ENCODE measurements at regions of chr2 and their contacts with region 1.

Region 1: DNA sequence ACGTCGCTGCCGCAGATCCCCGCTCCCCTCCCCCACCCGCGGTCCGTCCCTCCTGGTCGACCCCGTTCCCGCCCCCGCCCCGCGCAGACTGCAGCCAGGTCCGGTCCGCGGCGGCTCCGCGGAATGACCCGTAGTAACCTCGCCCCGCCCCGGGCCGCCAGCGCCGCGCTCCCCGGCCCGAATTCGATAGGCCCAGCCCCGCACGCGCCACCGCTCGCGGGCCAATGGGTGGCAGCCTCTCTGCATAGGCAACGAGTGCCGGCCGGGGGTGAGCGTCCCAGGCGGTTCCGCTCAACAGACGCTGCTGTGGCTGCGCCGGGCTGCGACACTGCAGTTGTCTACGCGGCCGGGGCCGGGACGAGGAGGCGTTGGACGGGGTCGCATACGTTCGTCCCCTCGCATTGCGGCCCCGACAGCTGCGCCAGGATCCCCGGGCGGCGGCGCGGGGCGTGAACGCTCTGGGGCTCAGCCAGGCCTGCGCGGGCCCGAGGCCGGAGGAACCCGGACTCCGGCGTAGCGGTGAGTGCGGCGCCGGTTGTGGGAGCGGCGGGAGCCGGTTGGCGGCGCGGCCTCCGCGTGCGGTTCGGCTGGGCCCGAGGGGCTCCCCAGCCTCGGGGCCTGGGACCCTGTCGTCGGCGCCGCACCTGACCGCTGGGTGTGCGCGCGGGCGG is at the start of gene ACSL3:
- DNase-seq: peak; percentile 85 to 96 (median 91)
- ATAC-seq: peak; percentile 99
- H3K4me3 ChIP-seq: peak within 1 kb of the TSS; percentile 82
- H3K4me3 Mint-ChIP-seq: peak within 1 kb of the TSS in 9 of 10 donors; percentile 62 to 88 (median 79)
- H3K27ac ChIP-seq: peak within 1 kb of the TSS; percentile 90
- H3K27ac Mint-ChIP-seq: peak within 1 kb of the TSS in 8 of 9 donors; percentile 87 to 96 (median 92)
- H3K4me1 ChIP-seq: peaks cover 13 to 20% of the 10 kb centered on the region in 2 donors
- H3K4me1 Mint-ChIP-seq: peaks cover 0 to 15% (median 9%) of the 10 kb centered on the region in 7 donors
- H3K27me3 ChIP-seq: no peaks in the 10 kb centered on the region
- H3K27me3 Mint-ChIP-seq: peaks cover 0 to 15% (median 0%) of the 10 kb centered on the region in 5 donors
- total RNA-seq, gene ACSL3: 30.3 to 69.6 (median 40.5) TPM

Region 2: GRCh38 chr2:222655787-222656525 is 204.9 kb before region 1 on chr2 and contains the start of gene FARSB:
- CTCF ChIA-PET with region 1: no interaction called
- POLR2A ChIA-PET with region 1: no interaction called
- intact Hi-C with region 1: loop called (anchors 1 kb)
- DNase-seq: peak; percentile 86 to 98 (median 94)
- ATAC-seq: peak; percentile 96
- H3K4me3 ChIP-seq: peak within 1 kb of the TSS; percentile 82
- H3K4me3 Mint-ChIP-seq: peak within 1 kb of the TSS; percentile 95 to 100 (median 99)
- H3K27ac ChIP-seq: peak within 1 kb of the TSS; percentile 94
- H3K27ac Mint-ChIP-seq: peak within 1 kb of the TSS; percentile 98 to 100 (median 99)
- H3K4me1 ChIP-seq: peaks cover 18 to 20% of the 10 kb centered on the region in 2 donors
- H3K4me1 Mint-ChIP-seq: peaks cover 30 to 59% (median 45%) of the 10 kb centered on the region in 7 donors
- H3K27me3 ChIP-seq: no peaks in the 10 kb centered on the region
- H3K27me3 Mint-ChIP-seq: no peaks in the 10 kb centered on the region
- total RNA-seq, gene FARSB: 10.5 to 23.3 (median 13.8) TPM

Region 3: GRCh38 chr2:222792001-222792611 is 68.8 kb before region 1 on chr2:
- CTCF ChIA-PET with region 1: no interaction called
- POLR2A ChIA-PET with region 1: no interaction called
- intact Hi-C with region 1: loop called (anchors 1 to 2 kb)
- DNase-seq: no peak
- ATAC-seq: peak; percentile 68
- H3K4me3 ChIP-seq: no peak overlapping the region
- H3K4me3 Mint-ChIP-seq: no peak overlapping the region
- H3K27ac ChIP-seq: no peak overlapping the region
- H3K27ac Mint-ChIP-seq: no peak overlapping the region
- H3K4me1 ChIP-seq: peaks cover 0 to 10% of the 10 kb centered on the region in 2 donors
- H3K4me1 Mint-ChIP-seq: peaks cover 11 to 17% (median 12%) of the 10 kb centered on the region in 7 donors
- H3K27me3 ChIP-seq: no peaks in the 10 kb centered on the region
- H3K27me3 Mint-ChIP-seq: no peaks in the 10 kb centered on the region

Region 4: GRCh38 chr2:222895144-222895543 is 34.3 kb after region 1 on chr2:
- CTCF ChIA-PET with region 1: no interaction called
- POLR2A ChIA-PET with region 1: no interaction called
- intact Hi-C with region 1: loop called in 1 of 2 experiments (anchors 2 kb)
- DNase-seq: no peak
- ATAC-seq: no peak
- H3K4me3 ChIP-seq: no peak overlapping the region
- H3K4me3 Mint-ChIP-seq: no peak overlapping the region
- H3K27ac ChIP-seq: no peak overlapping the region
- H3K27ac Mint-ChIP-seq: peak overlapping the region in 1 of 9 donors; percentile 6
- H3K4me1 ChIP-seq: no peaks in the 10 kb centered on the region
- H3K4me1 Mint-ChIP-seq: peaks cover 5 to 44% (median 36%) of the 10 kb centered on the region in 7 donors
- H3K27me3 ChIP-seq: no peaks in the 10 kb centered on the region
- H3K27me3 Mint-ChIP-seq: no peaks in the 10 kb centered on the region

Region 5: GRCh38 chr2:222912117-222912516 is 51.2 kb after region 1 on chr2:
- CTCF ChIA-PET with region 1: no interaction called
- POLR2A ChIA-PET with region 1: no interaction called
- intact Hi-C with region 1: no loop called
- DNase-seq: no peak
- ATAC-seq: peak; percentile 77
- H3K4me3 ChIP-seq: no peak overlapping the region
- H3K4me3 Mint-ChIP-seq: no peak overlapping the region
- H3K27ac ChIP-seq: no peak overlapping the region
- H3K27ac Mint-ChIP-seq: peak overlapping the region in 1 of 9 donors; percentile 47
- H3K4me1 ChIP-seq: no peaks in the 10 kb centered on the region
- H3K4me1 Mint-ChIP-seq: peaks cover 24 to 50% (median 43%) of the 10 kb centered on the region in 7 donors
- H3K27me3 ChIP-seq: no peaks in the 10 kb centered on the region
- H3K27me3 Mint-ChIP-seq: no peaks in the 10 kb centered on the region

Region 6: GRCh38 chr2:222939208-222939856 is 78.5 kb after region 1 on chr2:
- CTCF ChIA-PET with region 1: no interaction called
- POLR2A ChIA-PET with region 1: no interaction called
- intact Hi-C with region 1: loop called in 1 of 2 experiments (anchors 1 kb)
- DNase-seq: peak; percentile 8 to 58 (median 33)
- ATAC-seq: peak; percentile 89
- H3K4me3 ChIP-seq: no peak overlapping the region
- H3K4me3 Mint-ChIP-seq: no peak overlapping the region
- H3K27ac ChIP-seq: no peak overlapping the region
- H3K27ac Mint-ChIP-seq: no peak overlapping the region
- H3K4me1 ChIP-seq: no peaks in the 10 kb centered on the region
- H3K4me1 Mint-ChIP-seq: peaks cover 0 to 6% (median 0%) of the 10 kb centered on the region in 7 donors
- H3K27me3 ChIP-seq: no peaks in the 10 kb centered on the region
- H3K27me3 Mint-ChIP-seq: no peaks in the 10 kb centered on the region

Region 7: GRCh38 chr2:223909001-223909741 is 1048.3 kb after region 1 on chr2:
- CTCF ChIA-PET with region 1: no interaction called
- POLR2A ChIA-PET with region 1: no interaction called
- intact Hi-C with region 1: no loop called
- DNase-seq: no peak
- ATAC-seq: peak; percentile 65
- H3K4me3 ChIP-seq: no peak overlapping the region
- H3K4me3 Mint-ChIP-seq: no peak overlapping the region
- H3K27ac ChIP-seq: no peak overlapping the region
- H3K27ac Mint-ChIP-seq: peak overlapping the region in 2 of 9 donors; percentile 4 to 37
- H3K4me1 ChIP-seq: no peaks in the 10 kb centered on the region
- H3K4me1 Mint-ChIP-seq: peaks cover 4 to 16% (median 9%) of the 10 kb centered on the region in 7 donors
- H3K27me3 ChIP-seq: no peaks in the 10 kb centered on the region
- H3K27me3 Mint-ChIP-seq: no peaks in the 10 kb centered on the region

Measured in naive thymus-derived CD4-positive, alpha-beta T cell (primary cell).